ENCODE measurements at regions of chr1 and their contacts with region 1.

Region 1: DNA sequence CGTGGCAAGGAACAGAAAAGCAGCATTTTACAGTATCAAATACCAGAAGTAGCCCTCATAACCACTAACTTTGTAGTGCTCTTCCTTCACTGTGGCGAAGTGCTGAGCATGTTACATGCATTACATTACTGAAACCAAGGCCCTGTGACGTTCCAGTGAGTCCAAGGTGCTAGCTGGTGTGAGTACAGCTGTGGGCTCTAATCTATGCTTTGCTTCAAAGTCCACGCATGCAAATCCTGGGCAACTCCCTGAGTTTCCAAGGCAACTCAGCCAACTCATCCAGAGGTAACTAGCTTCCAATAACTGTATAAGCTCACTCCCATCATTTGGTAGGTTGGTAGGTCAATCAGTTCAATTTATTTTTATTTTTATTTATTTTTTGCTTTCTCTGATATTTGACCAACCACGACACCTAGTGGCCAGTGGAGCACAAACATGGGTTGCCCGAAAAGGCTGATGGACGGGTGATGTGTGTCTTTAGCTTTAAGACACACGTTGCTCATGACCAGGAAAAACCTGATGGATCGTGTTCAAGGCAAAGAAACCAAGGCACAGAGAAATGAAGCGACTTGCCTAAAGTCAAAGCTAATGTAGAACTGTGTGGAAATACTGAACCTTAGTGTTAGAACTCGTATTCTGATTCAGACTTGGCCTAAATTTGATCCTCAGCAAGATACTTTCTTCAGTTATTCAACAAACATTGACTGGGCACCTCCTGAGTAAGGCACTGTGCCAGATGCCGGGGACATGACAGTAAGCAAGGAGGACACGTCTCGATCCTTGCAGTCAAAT is 73.0 kb downstream of the GNG12 start:
- DNase-seq: peak; percentile 76
- H3K4me3 Mint-ChIP-seq: no peak overlapping the region
- H3K27ac Mint-ChIP-seq: peak overlapping the region; percentile 57
- H3K4me1 Mint-ChIP-seq: peaks cover 27% of the 10 kb centered on the region
- H3K27me3 Mint-ChIP-seq: no peaks in the 10 kb centered on the region
- CTCF ChIP-seq: peak; percentile 67

Region 2: GRCh38 chr1:67134695-67135094 is 625.5 kb before region 1 on chr1 and contains the start of gene C1orf141:
- CTCF ChIA-PET with region 1: no interaction called
- POLR2A ChIA-PET with region 1: no interaction called
- intact Hi-C with region 1: no loop called
- DNase-seq: no peak
- H3K4me3 Mint-ChIP-seq: no peak within 1 kb of the TSS
- H3K27ac Mint-ChIP-seq: no peak within 1 kb of the TSS
- H3K4me1 Mint-ChIP-seq: peaks cover 7% of the 10 kb centered on the region
- H3K27me3 Mint-ChIP-seq: no peaks in the 10 kb centered on the region
- CTCF ChIP-seq: no peak
- total RNA-seq, gene C1orf141: not detected in 2 replicates

Region 3: DNA sequence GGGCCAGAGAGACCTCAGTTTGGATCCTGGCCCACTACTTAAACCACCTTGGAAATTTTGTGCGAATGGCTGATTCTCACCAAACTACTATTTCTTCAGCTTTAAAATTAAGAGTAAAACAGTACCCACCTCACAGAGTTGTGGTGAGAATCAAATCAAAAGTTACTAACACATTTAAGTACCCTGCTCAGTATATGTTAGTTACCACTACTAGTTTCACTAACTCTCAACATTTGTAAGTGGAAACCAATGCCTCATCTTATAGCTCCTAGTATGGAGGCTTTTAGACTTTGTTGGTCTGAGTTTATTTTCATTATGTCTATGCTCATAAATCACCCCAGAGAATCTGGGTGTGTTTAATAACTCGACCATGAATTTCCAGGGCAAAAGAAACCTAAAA is 318.5 kb before region 1 on chr1:
- CTCF ChIA-PET with region 1: no interaction called
- POLR2A ChIA-PET with region 1: no interaction called
- intact Hi-C with region 1: no loop called
- DNase-seq: no peak
- H3K4me3 Mint-ChIP-seq: no peak overlapping the region
- H3K27ac Mint-ChIP-seq: no peak overlapping the region
- H3K4me1 Mint-ChIP-seq: peaks cover 13% of the 10 kb centered on the region
- H3K27me3 Mint-ChIP-seq: no peaks in the 10 kb centered on the region
- CTCF ChIP-seq: no peak

Region 4: DNA sequence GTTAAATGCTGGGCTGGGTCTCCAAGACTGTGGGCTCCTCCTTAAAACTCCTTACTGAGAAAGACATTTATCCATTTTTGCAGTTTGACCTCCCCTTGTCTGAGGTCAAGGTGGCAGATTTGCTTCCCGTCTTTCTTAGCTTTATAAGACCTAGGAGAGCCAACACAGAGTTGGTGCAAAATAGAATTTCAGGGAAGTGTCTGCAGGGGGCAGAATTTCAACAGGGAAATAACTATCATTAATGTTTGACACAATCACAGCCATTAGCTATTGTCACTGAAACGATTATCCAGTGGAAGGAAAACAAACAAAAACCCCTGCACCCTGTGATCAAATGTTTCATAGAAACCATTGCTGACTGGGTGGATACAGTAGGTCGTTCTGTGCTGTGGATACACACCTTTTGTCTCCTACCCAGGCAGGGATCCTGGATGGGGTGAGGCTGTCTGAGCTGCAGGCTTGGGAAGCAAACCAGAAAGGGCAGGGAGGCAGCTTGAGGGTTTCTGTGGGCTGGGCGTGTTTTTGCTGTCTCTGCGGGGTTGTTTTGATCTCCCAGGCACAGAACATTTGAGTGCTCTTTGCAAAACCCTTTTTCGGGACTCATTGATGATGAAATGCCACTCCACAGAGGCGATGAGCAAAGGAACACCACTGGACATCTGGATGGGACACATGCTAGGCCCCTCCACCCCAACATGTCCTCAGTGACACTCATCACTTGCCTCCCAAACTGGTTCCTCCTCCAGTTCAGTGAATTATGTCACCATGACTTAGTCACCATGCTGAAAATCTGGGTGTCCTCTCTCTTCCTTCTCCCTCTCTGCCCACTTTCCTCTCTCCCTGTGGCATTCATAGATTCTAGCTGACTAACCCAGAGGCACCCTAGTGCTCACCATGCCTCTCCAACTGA is 235.8 kb before region 1 on chr1:
- CTCF ChIA-PET with region 1: interaction called, 19 read pairs
- POLR2A ChIA-PET with region 1: no interaction called
- intact Hi-C with region 1: no loop called
- DNase-seq: no peak
- H3K4me3 Mint-ChIP-seq: no peak overlapping the region
- H3K27ac Mint-ChIP-seq: no peak overlapping the region
- H3K4me1 Mint-ChIP-seq: peaks cover 11% of the 10 kb centered on the region
- H3K27me3 Mint-ChIP-seq: no peaks in the 10 kb centered on the region
- CTCF ChIP-seq: peak; percentile 10

Region 5: GRCh38 chr1:67561704-67562113 is 198.5 kb before region 1 on chr1:
- CTCF ChIA-PET with region 1: interaction called, 98 read pairs
- POLR2A ChIA-PET with region 1: interaction called, 20 read pairs
- intact Hi-C with region 1: loop called (anchors 1 kb)
- DNase-seq: peak; percentile 90
- H3K4me3 Mint-ChIP-seq: no peak overlapping the region
- H3K27ac Mint-ChIP-seq: no peak overlapping the region
- H3K4me1 Mint-ChIP-seq: peaks cover 6% of the 10 kb centered on the region
- H3K27me3 Mint-ChIP-seq: no peaks in the 10 kb centered on the region
- CTCF ChIP-seq: peak; percentile 95

Region 6: GRCh38 chr1:67674260-67675011 is 85.8 kb before region 1 on chr1:
- CTCF ChIA-PET with region 1: interaction called, 12 read pairs
- POLR2A ChIA-PET with region 1: no interaction called
- intact Hi-C with region 1: no loop called
- DNase-seq: no peak
- H3K4me3 Mint-ChIP-seq: no peak overlapping the region
- H3K27ac Mint-ChIP-seq: no peak overlapping the region
- H3K4me1 Mint-ChIP-seq: peaks cover under 1% of the 10 kb centered on the region
- H3K27me3 Mint-ChIP-seq: no peaks in the 10 kb centered on the region
- CTCF ChIP-seq: no peak

Region 7: GRCh38 chr1:67723620-67724019 is 36.6 kb before region 1 on chr1:
- CTCF ChIA-PET with region 1: interaction called, 11 read pairs
- POLR2A ChIA-PET with region 1: interaction called, 3 read pairs
- intact Hi-C with region 1: no loop called
- DNase-seq: peak; percentile 77
- H3K4me3 Mint-ChIP-seq: no peak overlapping the region
- H3K27ac Mint-ChIP-seq: no peak overlapping the region
- H3K4me1 Mint-ChIP-seq: peaks cover 16% of the 10 kb centered on the region
- H3K27me3 Mint-ChIP-seq: no peaks in the 10 kb centered on the region
- CTCF ChIP-seq: no peak

Region 8: DNA sequence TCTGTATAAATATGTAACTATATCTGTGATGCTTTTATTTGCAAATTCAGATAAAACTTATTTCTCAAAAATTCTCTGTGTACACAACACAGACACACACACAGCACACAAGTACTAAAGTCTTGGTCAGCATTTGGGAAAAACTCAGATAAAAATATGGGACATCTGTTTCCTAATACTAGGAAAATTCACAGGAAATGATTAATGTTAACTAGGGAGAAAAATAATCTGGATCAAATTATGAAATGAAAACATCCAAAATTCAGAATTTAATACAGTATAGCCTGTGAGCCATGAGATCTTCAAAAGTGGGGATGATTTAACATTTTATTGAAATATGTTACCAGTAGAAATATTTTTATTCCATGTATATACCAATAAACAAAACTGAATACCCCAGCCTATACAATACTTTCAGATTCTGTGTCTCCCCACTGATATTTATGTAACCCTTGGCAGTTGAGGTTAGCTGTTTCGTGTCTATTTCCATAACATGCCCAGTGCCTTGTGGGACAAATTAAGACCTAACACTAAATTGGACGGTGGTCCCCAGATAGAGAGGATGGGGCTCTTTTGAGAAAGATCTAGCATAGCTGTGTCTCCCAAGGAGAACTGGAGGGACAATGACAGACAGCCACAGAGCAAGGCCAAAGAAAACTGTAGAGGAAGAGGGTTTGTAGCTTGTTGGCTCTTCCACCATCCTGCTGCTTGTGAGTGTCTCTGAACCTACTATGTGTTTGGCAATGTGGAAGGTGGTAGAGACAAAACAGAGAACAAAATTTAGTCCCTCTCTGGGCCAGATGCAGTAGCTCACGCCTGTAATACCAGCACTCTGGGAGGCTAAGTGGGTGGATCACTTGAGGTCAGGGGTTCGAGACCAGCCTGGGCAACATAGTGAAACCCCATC is 25.9 kb after region 1 on chr1:
- CTCF ChIA-PET with region 1: interaction called, 28 read pairs
- POLR2A ChIA-PET with region 1: no interaction called
- intact Hi-C with region 1: no loop called
- DNase-seq: no peak
- H3K4me3 Mint-ChIP-seq: no peak overlapping the region
- H3K27ac Mint-ChIP-seq: no peak overlapping the region
- H3K4me1 Mint-ChIP-seq: peaks cover 40% of the 10 kb centered on the region
- H3K27me3 Mint-ChIP-seq: no peaks in the 10 kb centered on the region
- CTCF ChIP-seq: no peak

Measured in MCF 10A (cell line).